ENCODE measurements at regions of chr12 and their contacts with region 1.

Region 1: GRCh38 chr12:3998968-3999826 is 126.0 kb upstream of the PARP11 start:
- DNase-seq: no peak
- H3K4me3 Mint-ChIP-seq: no peak overlapping the region
- H3K27ac Mint-ChIP-seq: no peak overlapping the region
- H3K4me1 Mint-ChIP-seq: peaks cover 9% of the 10 kb centered on the region
- H3K27me3 Mint-ChIP-seq: peaks cover 5% of the 10 kb centered on the region

Region 2: GRCh38 chr12:3944620-3945019 is 54.6 kb before region 1 on chr12:
- intact Hi-C with region 1: no loop called
- DNase-seq: no peak
- H3K4me3 Mint-ChIP-seq: no peak overlapping the region
- H3K27ac Mint-ChIP-seq: no peak overlapping the region
- H3K4me1 Mint-ChIP-seq: peaks cover 29% of the 10 kb centered on the region
- H3K27me3 Mint-ChIP-seq: peaks cover 7% of the 10 kb centered on the region

Region 3: DNA sequence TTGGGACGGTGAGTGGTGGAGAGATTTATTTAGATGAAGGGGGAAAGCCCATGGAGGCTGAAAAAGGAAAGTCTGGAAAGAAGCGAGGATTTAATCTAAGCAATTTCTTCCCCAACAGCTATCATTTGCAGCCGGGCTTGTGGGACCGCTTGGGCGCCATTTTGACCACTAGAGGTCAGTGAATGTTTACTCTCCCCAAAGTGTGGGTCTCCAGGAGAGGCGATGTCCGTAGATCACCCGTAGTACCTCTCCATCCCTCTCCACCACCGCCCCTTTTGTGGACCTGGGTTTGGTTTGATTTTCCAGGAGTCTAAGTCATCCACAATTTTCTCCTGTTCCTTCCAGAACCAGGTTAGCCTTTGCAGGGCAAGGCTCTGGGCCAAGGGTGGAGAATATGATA is 34.8 kb before region 1 on chr12:
- intact Hi-C with region 1: loop called (anchors 5 kb)
- DNase-seq: no peak
- H3K4me3 Mint-ChIP-seq: no peak overlapping the region
- H3K27ac Mint-ChIP-seq: no peak overlapping the region
- H3K4me1 Mint-ChIP-seq: peaks cover 31% of the 10 kb centered on the region
- H3K27me3 Mint-ChIP-seq: no peaks in the 10 kb centered on the region

Measured in activated T-helper 2 cell treated with anti-CD3 and anti-CD28 coated beads, Interferon-gamma antibody, Interleukin-2, Interleukin-4, amounts not matched to agents 10 μg/mL and 5 μg/mL and 100 μg/mL, durations not matched to agents 14 hours and 24 hours and 36 hours (primary cell).